Colonic mucosa (tissue), 4 donors: ENCODE measurements at regions of chr6 and their contacts with region 1.

Region 1: GRCh38 chr6:110682460-110682853 is 132.8 kb downstream of the CDK19 start:
- DNase-seq: peak; percentile 90
- H3K4me3 ChIP-seq: no peak overlapping the region
- H3K27ac ChIP-seq: peak overlapping the region; percentile 61
- H3K4me1 ChIP-seq: peaks cover 3% of the 10 kb centered on the region
- H3K27me3 ChIP-seq: no peaks in the 10 kb centered on the region
- CTCF ChIP-seq: peak; percentile 64

Region 2: DNA sequence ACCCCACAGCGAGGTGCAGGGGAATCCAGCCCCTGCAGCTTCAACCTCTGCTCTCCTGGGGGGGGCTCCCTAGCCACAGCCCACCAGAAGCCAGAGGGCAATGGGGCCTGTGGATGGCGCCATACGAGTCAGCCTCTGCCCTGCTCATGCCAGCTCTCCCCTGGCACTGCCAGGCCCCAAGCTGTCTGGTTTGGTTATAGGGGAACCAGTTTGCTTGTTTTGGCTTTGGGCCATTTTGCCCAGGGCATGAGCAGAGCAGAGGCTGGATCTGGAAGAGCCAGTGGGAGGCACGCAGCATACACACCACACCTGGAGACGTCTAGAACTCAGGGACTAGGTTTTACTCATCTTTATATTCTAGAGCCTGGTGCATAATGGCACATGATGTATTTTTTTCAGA is 139.4 kb before region 1 on chr6:
- intact Hi-C with region 1: no loop called
- DNase-seq: no peak
- H3K4me3 ChIP-seq: no peak overlapping the region
- H3K27ac ChIP-seq: no peak overlapping the region
- H3K4me1 ChIP-seq: no peaks in the 10 kb centered on the region
- H3K27me3 ChIP-seq: no peaks in the 10 kb centered on the region
- CTCF ChIP-seq: no peak

Region 3: GRCh38 chr6:110873981-110874879 is 191.8 kb after region 1 on chr6 and contains the start of gene AMD1:
- intact Hi-C with region 1: loop called (anchors 10 kb)
- DNase-seq: peak; percentile 97
- H3K4me3 ChIP-seq: peak within 1 kb of the TSS; percentile 90
- H3K27ac ChIP-seq: peak within 1 kb of the TSS; percentile 92
- H3K4me1 ChIP-seq: peaks cover 11% of the 10 kb centered on the region
- H3K27me3 ChIP-seq: no peaks in the 10 kb centered on the region
- CTCF ChIP-seq: no peak
- total RNA-seq, gene AMD1: 70.4 to 72.7 TPM

Region 4: GRCh38 chr6:110949679-110950285 is 267.3 kb after region 1 on chr6:
- intact Hi-C with region 1: loop called (anchors 5 kb)
- DNase-seq: no peak
- H3K4me3 ChIP-seq: no peak overlapping the region
- H3K27ac ChIP-seq: no peak overlapping the region
- H3K4me1 ChIP-seq: no peaks in the 10 kb centered on the region
- H3K27me3 ChIP-seq: no peaks in the 10 kb centered on the region
- CTCF ChIP-seq: peak; percentile 39